ENCODE measurements at regions of chr1 and their contacts with region 1.

Region 1: GRCh38 chr1:247407180-247407616 is 8.8 kb upstream of the NLRP3 start:
- DNase-seq: peak; percentile 82
- H3K4me3 Mint-ChIP-seq: peak overlapping the region; percentile 45
- H3K27ac Mint-ChIP-seq: peak overlapping the region; percentile 63
- H3K4me1 Mint-ChIP-seq: peaks cover 43% of the 10 kb centered on the region
- H3K27me3 Mint-ChIP-seq: peaks cover 6% of the 10 kb centered on the region

Region 2: DNA sequence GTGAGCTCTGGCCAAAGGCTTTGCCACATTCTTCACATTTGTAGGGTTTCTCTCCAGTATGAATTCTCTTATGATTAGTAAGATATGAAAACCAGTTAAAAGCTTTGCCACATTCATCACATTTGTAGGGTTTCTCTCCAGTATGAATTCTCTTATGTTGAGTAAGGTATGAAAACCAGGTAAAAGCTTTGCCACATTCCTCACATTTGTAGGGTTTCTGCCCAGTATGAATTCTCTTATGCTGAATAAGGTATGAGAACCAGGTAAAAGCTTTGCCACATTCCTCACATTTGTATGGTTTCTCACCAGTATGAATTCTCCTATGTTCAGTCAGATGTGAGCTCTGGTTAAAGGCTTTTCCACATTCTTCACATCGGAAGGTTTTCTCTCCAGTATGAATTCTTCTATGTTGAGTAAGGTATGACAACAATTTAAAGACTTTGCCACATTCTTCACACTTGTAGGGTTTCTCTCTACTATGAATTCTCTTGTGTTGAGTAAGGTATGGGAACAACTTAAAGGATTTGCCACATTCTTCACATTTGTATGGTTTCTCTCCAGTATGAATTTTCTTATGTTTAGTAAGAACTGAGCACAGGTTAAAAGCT is 420.0 kb before region 1 on chr1:
- CTCF ChIA-PET with region 1: no interaction called
- POLR2A ChIA-PET with region 1: no interaction called
- intact Hi-C with region 1: no loop called
- DNase-seq: no peak
- H3K4me3 Mint-ChIP-seq: no peak overlapping the region
- H3K27ac Mint-ChIP-seq: no peak overlapping the region
- H3K4me1 Mint-ChIP-seq: no peaks in the 10 kb centered on the region
- H3K27me3 Mint-ChIP-seq: peaks cover 4% of the 10 kb centered on the region

Region 3: GRCh38 chr1:247421074-247421473 is 13.9 kb after region 1 on chr1:
- CTCF ChIA-PET with region 1: no interaction called
- POLR2A ChIA-PET with region 1: no interaction called
- intact Hi-C with region 1: loop called (anchors 1 kb)
- DNase-seq: peak; percentile 68
- H3K4me3 Mint-ChIP-seq: no peak overlapping the region
- H3K27ac Mint-ChIP-seq: no peak overlapping the region
- H3K4me1 Mint-ChIP-seq: peaks cover 49% of the 10 kb centered on the region
- H3K27me3 Mint-ChIP-seq: no peaks in the 10 kb centered on the region

Region 4: DNA sequence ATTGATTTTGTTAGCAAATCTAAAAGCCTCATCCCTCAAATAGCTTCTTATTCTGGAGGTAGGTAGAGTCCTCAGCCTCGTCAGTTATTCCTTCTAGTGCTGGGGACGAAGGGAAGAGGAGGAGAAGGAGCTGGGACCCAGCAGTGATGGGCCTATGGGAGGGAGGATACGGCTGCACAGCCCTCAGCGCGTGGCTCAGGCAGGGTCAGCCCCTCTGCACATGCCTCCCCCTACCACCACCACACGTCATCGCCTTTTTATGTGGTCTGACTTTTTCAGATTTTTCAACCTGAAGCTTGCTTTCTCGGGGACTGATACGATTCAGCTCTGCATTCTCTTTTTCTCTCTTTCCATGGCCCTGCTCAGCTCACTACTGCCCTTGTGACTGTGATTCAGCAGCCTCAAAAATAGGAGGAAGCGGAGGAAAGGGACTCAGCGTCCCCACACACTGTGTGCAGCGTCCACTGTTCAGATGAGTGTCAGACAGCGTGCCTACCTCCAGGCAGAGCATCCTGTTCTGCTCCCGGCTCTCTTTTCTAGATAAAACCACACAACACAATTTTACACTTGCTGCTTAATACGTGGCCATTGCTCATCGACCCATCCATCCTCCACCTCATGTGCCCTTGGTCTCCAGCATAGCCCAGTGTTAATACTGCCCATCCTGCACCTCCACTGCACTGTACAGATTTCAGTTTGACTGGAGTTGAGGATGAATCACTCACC is 49.9 kb after region 1 on chr1:
- CTCF ChIA-PET with region 1: no interaction called
- POLR2A ChIA-PET with region 1: no interaction called
- intact Hi-C with region 1: loop called (anchors 5 kb)
- DNase-seq: peak; percentile 44
- H3K4me3 Mint-ChIP-seq: no peak overlapping the region
- H3K27ac Mint-ChIP-seq: no peak overlapping the region
- H3K4me1 Mint-ChIP-seq: peaks cover 13% of the 10 kb centered on the region
- H3K27me3 Mint-ChIP-seq: peaks cover 14% of the 10 kb centered on the region

Region 5: GRCh38 chr1:247906504-247907047 is 499.4 kb after region 1 on chr1:
- CTCF ChIA-PET with region 1: no interaction called
- POLR2A ChIA-PET with region 1: no interaction called
- intact Hi-C with region 1: loop called (anchors 5 kb)
- DNase-seq: peak; percentile 50
- H3K4me3 Mint-ChIP-seq: peak overlapping the region; percentile 24
- H3K27ac Mint-ChIP-seq: peak overlapping the region; percentile 51
- H3K4me1 Mint-ChIP-seq: peaks cover 16% of the 10 kb centered on the region
- H3K27me3 Mint-ChIP-seq: no peaks in the 10 kb centered on the region